B cell (primary cell): ENCODE measurements at regions of chr11 and their contacts with region 1.

Region 1: GRCh38 chr11:59076876-59077571 is 9.1 kb upstream of the GLYATL1B start:
- DNase-seq: peak; percentile 76
- ATAC-seq: peak; percentile 86
- H3K4me3 ChIP-seq: peak overlapping the region in 1 of 5 experiments; percentile 15
- H3K4me3 Mint-ChIP-seq: peak overlapping the region; percentile 60
- H3K27ac ChIP-seq: peak overlapping the region; percentile 70 to 80
- H3K27ac Mint-ChIP-seq: peak overlapping the region; percentile 79
- H3K4me1 ChIP-seq: peaks cover 54 to 58% of the 10 kb centered on the region in 2 donors
- H3K4me1 Mint-ChIP-seq: peaks cover 55% of the 10 kb centered on the region
- H3K27me3 ChIP-seq: no peaks in the 10 kb centered on the region
- H3K27me3 Mint-ChIP-seq: no peaks in the 10 kb centered on the region
- CTCF ChIP-seq: no peak

Region 2: DNA sequence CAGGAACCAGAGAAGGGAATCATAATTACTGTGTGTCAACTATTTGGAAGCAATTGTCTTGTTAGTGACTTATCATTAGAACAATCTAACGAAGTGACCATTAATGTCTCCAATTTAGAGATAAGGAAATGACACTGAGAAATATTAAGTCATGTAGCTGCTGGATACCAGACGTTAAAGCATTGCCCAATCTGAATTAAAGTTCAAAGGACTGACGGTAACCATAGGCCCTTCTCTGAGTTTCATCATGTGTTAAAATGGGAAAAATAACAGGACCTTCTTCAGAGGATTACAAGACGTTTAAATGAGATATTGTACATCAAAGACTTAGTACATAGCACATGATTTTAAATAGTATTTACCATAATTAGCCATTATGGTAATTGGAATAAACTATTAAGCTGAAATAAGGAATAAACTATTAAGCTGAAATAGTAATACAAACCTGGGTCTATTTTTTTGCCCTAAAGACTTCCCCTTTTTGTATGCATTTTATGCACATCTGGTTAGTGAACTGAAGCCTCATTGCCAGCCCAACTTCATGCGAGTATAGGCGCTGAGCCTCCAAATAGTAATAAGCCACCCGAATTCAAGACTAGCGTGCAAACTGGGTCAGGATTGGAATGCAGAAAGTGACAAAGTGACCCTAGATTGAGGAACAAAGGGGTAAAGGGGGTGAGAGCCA is 96.7 kb before region 1 on chr11:
- CTCF ChIA-PET with region 1: no interaction called
- POLR2A ChIA-PET with region 1: no interaction called
- intact Hi-C with region 1: no loop called
- DNase-seq: peak; percentile 15
- ATAC-seq: peak; percentile 24
- H3K4me3 ChIP-seq: no peak overlapping the region
- H3K4me3 Mint-ChIP-seq: no peak overlapping the region
- H3K27ac ChIP-seq: no peak overlapping the region
- H3K27ac Mint-ChIP-seq: peak overlapping the region; percentile 44
- H3K4me1 ChIP-seq: peaks cover 3 to 6% of the 10 kb centered on the region in 2 donors
- H3K4me1 Mint-ChIP-seq: peaks cover 15% of the 10 kb centered on the region
- H3K27me3 ChIP-seq: no peaks in the 10 kb centered on the region
- H3K27me3 Mint-ChIP-seq: no peaks in the 10 kb centered on the region
- CTCF ChIP-seq: no peak

Region 3: DNA sequence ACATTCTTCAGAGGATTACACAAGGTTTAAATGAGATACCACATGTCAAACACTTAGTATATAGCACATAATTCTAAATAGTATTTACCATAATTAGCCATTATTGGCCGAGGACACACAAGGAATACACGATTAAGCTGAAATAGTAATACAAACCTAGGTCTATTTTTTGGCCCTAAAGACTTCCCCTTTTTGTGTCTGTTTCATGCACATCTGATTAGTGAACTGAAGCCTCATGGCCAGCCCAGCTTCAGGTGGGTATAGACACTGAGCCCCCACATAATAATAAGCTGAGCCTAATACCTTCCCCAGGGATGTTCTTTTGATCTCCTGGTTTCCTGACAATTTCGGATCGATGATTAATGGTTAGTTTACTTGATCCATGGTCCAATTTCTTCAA is 11.1 kb after region 1 on chr11:
- CTCF ChIA-PET with region 1: interaction called, 6 read pairs
- POLR2A ChIA-PET with region 1: interaction called, 4 read pairs
- intact Hi-C with region 1: loop called (anchors 1 kb)
- DNase-seq: peak; percentile 66
- ATAC-seq: peak; percentile 88
- H3K4me3 ChIP-seq: no peak overlapping the region
- H3K4me3 Mint-ChIP-seq: peak overlapping the region; percentile 8
- H3K27ac ChIP-seq: peak overlapping the region; percentile 16 to 73
- H3K27ac Mint-ChIP-seq: peak overlapping the region; percentile 59
- H3K4me1 ChIP-seq: peaks cover 30 to 38% of the 10 kb centered on the region in 2 donors
- H3K4me1 Mint-ChIP-seq: peaks cover 45% of the 10 kb centered on the region
- H3K27me3 ChIP-seq: no peaks in the 10 kb centered on the region
- H3K27me3 Mint-ChIP-seq: no peaks in the 10 kb centered on the region
- CTCF ChIP-seq: no peak

Region 4: GRCh38 chr11:59097113-59097708 is 20.2 kb after region 1 on chr11:
- CTCF ChIA-PET with region 1: interaction called, 7 read pairs
- POLR2A ChIA-PET with region 1: interaction called, 5 read pairs
- intact Hi-C with region 1: loop called (anchors 2 kb)
- DNase-seq: peak; percentile 77
- ATAC-seq: peak; percentile 29
- H3K4me3 ChIP-seq: peak overlapping the region in 4 of 5 experiments; percentile 8 to 37 (median 34)
- H3K4me3 Mint-ChIP-seq: peak overlapping the region; percentile 64
- H3K27ac ChIP-seq: peak overlapping the region; percentile 65 to 85
- H3K27ac Mint-ChIP-seq: peak overlapping the region; percentile 91
- H3K4me1 ChIP-seq: peaks cover 77 to 89% of the 10 kb centered on the region in 2 donors
- H3K4me1 Mint-ChIP-seq: peaks cover 86% of the 10 kb centered on the region
- H3K27me3 ChIP-seq: no peaks in the 10 kb centered on the region
- H3K27me3 Mint-ChIP-seq: no peaks in the 10 kb centered on the region
- CTCF ChIP-seq: peak; percentile 72